ENCODE measurements at regions of chr2 and their contacts with region 1.

Region 1: DNA sequence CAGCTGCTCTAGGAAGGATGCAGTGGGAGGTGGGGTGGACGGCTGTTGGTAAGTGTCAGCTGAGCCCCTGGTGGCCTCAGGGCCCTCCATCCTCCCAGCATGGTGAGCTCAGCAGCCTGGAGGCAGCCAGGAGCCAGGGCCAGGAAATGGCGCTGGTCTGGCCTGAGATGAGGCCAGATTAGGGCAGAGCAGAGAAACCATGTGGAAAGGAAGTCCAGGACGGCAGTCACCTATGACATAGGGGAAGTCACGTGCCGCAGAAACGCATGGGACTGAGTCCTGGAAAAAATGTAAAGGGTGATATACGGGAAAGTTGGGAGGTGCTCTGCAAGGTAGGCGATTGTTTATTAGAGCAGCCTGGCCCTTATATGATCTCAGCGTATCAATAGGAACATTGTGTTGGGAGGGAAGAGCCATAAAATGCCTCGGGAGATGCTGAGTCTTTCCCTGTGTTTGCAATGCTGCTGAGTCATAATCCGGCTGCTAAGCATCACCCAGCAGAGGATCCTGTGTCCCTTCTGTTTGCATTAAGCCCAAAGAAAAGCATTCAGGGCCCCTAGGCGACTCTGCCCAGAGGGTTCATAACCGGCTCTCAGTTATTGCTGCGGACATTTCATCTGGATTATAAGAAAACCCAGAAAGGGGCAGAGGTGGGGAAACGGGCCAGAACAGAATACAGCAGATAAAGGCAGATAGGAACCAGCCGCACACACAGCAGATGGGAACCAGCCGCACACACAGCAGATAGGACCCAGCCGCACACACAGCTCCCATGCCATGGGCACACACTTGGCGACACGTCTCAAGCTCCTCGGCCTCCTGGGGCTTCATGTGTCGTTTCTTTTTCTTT is 30.3 kb upstream of the B3GNT7 start:
- H3K4me3 Mint-ChIP-seq: no peak overlapping the region
- H3K27ac Mint-ChIP-seq: peak overlapping the region; percentile 60
- H3K4me1 Mint-ChIP-seq: peaks cover 44% of the 10 kb centered on the region
- H3K27me3 Mint-ChIP-seq: no peaks in the 10 kb centered on the region

Region 2: DNA sequence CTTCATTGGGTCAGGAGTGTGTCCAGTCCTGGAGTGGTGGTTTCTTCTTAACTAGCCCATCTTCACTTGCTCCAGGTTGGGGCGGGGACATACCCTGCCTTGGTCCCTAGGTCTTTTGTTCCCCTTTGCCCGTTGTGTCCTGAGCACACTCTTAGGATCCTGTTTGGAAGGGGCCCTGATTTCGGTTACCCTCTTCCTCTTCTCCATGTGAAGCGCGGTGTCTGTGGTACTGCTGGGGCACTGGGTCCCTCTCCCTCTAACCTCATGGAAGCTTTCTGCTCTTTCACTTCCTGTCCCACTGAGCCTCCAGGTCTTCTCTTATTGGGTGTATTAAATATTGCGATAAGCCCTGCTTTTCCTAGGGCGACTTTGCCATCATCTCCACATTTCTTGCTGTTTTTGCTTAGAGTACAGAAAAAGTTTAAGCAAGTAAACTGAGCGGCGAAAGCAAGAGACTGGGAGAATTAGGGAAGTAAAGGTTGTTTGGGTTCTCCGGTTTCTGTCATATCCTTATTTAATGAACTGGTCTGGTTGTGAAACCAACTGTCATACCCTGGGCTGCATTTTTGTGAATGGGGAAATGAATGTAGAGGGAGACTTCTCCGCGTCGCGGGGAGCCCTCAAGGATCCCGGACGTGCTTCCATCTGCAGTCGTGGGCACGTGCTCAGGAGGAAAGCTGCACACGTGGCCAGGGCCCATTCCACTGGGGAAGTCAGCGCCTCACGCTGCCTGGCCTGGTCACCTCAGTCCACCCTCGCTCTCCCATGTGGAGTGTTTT is 43.4 kb before region 1 on chr2:
- intact Hi-C with region 1: loop called (anchors 5 kb)
- H3K4me3 Mint-ChIP-seq: peak overlapping the region; percentile 52
- H3K27ac Mint-ChIP-seq: peak overlapping the region; percentile 92
- H3K4me1 Mint-ChIP-seq: peaks cover 62% of the 10 kb centered on the region
- H3K27me3 Mint-ChIP-seq: peaks cover 6% of the 10 kb centered on the region

Region 3: DNA sequence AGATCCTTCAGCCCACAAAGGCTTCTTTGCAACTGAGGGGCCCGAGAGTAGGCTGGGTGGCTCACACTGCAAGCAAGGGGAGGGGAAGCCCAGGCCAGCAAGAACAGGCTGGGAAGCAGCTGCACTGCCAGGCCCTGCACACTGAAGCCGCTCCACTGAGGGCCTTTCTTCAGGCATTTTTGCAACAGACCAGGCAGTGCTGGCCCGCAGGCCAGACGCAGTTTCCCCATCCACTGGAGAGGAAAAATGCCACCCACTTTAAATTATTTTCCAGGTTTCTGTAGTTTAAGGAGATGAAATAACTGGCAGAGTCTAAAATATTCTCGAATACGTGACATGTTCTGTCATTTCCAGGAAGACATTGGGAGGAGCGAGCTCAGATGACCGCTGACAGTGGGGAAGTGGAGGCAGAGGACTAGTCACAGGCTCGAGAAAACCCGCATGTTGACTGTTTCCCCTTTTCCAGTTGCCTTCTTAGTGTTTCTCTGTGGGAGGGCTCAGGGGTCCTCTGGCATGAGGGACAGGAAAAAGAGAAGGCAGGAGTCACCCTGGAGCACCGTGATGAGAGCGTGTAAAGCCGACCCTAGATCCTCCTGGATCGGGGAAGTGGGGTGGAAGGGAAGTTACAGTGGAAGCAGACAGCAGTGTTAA is 23.0 kb before region 1 on chr2:
- intact Hi-C with region 1: loop called (anchors 2 kb)
- H3K4me3 Mint-ChIP-seq: peak overlapping the region; percentile 18
- H3K27ac Mint-ChIP-seq: peak overlapping the region; percentile 91
- H3K4me1 Mint-ChIP-seq: peaks cover 36% of the 10 kb centered on the region
- H3K27me3 Mint-ChIP-seq: no peaks in the 10 kb centered on the region